Transverse colon (tissue), 4 donors: ENCODE measurements at regions of chr2 and their contacts with region 1.

Region 1: DNA sequence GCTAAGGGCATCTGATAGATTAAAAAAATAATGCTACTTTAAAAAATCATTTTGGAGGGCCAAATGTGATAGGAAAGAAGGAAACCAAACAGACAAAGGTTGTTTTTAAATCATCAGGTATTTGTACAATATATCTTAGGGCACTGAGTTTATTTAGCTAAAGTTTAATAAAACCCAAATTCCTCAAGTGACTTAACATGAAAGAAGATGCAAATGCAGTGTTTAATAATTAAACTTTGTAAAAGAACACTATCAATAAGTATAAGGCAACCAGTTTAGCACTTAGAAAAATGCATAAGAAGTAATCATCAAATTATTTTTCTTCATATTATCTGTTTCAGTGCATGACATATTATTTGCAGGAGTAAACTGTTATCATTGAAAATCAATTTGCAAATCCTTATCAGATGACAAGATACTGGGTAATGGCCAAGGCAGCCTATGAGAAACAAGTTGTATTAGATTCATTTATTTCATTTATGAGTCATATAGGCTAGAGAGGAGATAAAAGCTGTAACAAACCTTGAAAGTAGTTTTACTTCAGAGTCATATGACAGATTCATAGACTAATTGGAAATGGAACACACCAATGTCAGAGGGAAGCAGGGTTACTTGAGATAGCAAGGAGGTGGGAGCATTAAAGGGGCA is 165.5 kb downstream of the GCA start:
- DNase-seq: no peak
- H3K4me3 ChIP-seq: no peak overlapping the region
- H3K27ac ChIP-seq: no peak overlapping the region
- H3K4me1 ChIP-seq: no peaks in the 10 kb centered on the region
- H3K27me3 ChIP-seq: no peaks in the 10 kb centered on the region
- CTCF ChIP-seq: no peak
- EP300 ChIP-seq: no peak
- POLR2A ChIP-seq: no peak

Region 2: GRCh38 chr2:162473986-162474385 is 35.4 kb before region 1 on chr2:
- in situ Hi-C with region 1: no loop called
- intact Hi-C with region 1: loop called (anchors 1 kb)
- DNase-seq: no peak
- H3K4me3 ChIP-seq: no peak overlapping the region
- H3K27ac ChIP-seq: no peak overlapping the region
- H3K4me1 ChIP-seq: no peaks in the 10 kb centered on the region
- H3K27me3 ChIP-seq: no peaks in the 10 kb centered on the region
- CTCF ChIP-seq: no peak
- EP300 ChIP-seq: no peak
- POLR2A ChIP-seq: no peak